ENCODE measurements at regions of chr18 and their contacts with region 1.

Region 1: GRCh38 chr18:3062798-3063680 is 50.1 kb upstream of the LPIN2 start:
- DNase-seq: peak; percentile 59 to 80
- ATAC-seq: peak; percentile 63 to 83 (median 76)
- H3K4me3 ChIP-seq: no peak overlapping the region
- H3K27ac ChIP-seq: no peak overlapping the region
- H3K4me1 ChIP-seq: no peaks in the 10 kb centered on the region
- H3K27me3 ChIP-seq: no peaks in the 10 kb centered on the region
- CTCF ChIP-seq: peak; percentile 74

Region 2: GRCh38 chr18:3008541-3008940 is 54.5 kb before region 1 on chr18:
- intact Hi-C with region 1: loop called in 1 of 2 experiments (anchors 5 kb)
- DNase-seq: no peak
- ATAC-seq: no peak
- H3K4me3 ChIP-seq: no peak overlapping the region
- H3K27ac ChIP-seq: no peak overlapping the region
- H3K4me1 ChIP-seq: no peaks in the 10 kb centered on the region
- H3K27me3 ChIP-seq: no peaks in the 10 kb centered on the region
- CTCF ChIP-seq: no peak

Region 3: DNA sequence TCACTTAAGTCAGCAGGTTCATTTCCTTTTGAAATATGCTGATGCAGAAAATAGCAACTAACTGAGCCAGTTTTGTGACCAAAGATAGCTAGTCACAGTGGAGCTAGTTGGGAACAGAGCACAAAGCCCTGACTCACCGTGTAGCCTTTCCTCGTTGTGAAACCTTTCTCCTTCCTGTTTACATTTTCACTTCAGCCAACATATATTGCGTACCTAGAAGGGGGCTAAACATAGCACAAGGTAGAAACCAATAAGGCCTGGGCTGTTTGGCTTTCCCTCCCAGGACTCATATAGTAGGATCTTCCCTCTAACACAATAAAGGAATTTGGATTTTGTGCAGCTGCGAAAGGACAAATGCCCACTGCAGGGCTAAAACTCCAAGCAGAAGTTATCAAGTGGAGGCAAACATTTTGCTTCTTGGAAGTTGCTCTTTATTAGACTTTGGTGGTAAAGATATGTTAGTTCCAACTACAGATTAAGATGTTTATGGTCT is 25.6 kb before region 1 on chr18:
- intact Hi-C with region 1: no loop called
- DNase-seq: no peak
- ATAC-seq: peak; percentile 57 to 85 (median 72)
- H3K4me3 ChIP-seq: no peak overlapping the region
- H3K27ac ChIP-seq: no peak overlapping the region
- H3K4me1 ChIP-seq: no peaks in the 10 kb centered on the region
- H3K27me3 ChIP-seq: no peaks in the 10 kb centered on the region
- CTCF ChIP-seq: no peak

Measured in psoas muscle (tissue), 8 donors.